ENCODE measurements at regions of chr20 and their contacts with region 1.

Region 1: GRCh38 chr20:57654363-57654997 is 34.3 kb upstream of the ZBP1 start:
- DNase-seq: peak; percentile 85
- H3K4me3 Mint-ChIP-seq: no peak overlapping the region
- H3K27ac Mint-ChIP-seq: no peak overlapping the region
- H3K4me1 Mint-ChIP-seq: peaks cover 11% of the 10 kb centered on the region
- H3K27me3 Mint-ChIP-seq: peaks cover 3% of the 10 kb centered on the region

Region 2: GRCh38 chr20:58087193-58087858 is 432.8 kb after region 1 on chr20:
- intact Hi-C with region 1: loop called (anchors 10 kb)
- DNase-seq: peak; percentile 61
- H3K4me3 Mint-ChIP-seq: no peak overlapping the region
- H3K27ac Mint-ChIP-seq: no peak overlapping the region
- H3K4me1 Mint-ChIP-seq: no peaks in the 10 kb centered on the region
- H3K27me3 Mint-ChIP-seq: no peaks in the 10 kb centered on the region

Region 3: GRCh38 chr20:58179432-58180099 is 525.1 kb after region 1 on chr20:
- intact Hi-C with region 1: loop called (anchors 1 kb)
- DNase-seq: peak; percentile 92
- H3K4me3 Mint-ChIP-seq: peak overlapping the region; percentile 59
- H3K27ac Mint-ChIP-seq: no peak overlapping the region
- H3K4me1 Mint-ChIP-seq: peaks cover 4% of the 10 kb centered on the region
- H3K27me3 Mint-ChIP-seq: peaks cover 23% of the 10 kb centered on the region

Region 4: GRCh38 chr20:58209652-58210397 is 555.3 kb after region 1 on chr20:
- intact Hi-C with region 1: loop called (anchors 2 kb)
- DNase-seq: peak; percentile 96
- H3K4me3 Mint-ChIP-seq: no peak overlapping the region
- H3K27ac Mint-ChIP-seq: peak overlapping the region; percentile 39
- H3K4me1 Mint-ChIP-seq: peaks cover 8% of the 10 kb centered on the region
- H3K27me3 Mint-ChIP-seq: peaks cover 23% of the 10 kb centered on the region